ENCODE measurements at regions of chr5 and their contacts with region 1.

Region 1: DNA sequence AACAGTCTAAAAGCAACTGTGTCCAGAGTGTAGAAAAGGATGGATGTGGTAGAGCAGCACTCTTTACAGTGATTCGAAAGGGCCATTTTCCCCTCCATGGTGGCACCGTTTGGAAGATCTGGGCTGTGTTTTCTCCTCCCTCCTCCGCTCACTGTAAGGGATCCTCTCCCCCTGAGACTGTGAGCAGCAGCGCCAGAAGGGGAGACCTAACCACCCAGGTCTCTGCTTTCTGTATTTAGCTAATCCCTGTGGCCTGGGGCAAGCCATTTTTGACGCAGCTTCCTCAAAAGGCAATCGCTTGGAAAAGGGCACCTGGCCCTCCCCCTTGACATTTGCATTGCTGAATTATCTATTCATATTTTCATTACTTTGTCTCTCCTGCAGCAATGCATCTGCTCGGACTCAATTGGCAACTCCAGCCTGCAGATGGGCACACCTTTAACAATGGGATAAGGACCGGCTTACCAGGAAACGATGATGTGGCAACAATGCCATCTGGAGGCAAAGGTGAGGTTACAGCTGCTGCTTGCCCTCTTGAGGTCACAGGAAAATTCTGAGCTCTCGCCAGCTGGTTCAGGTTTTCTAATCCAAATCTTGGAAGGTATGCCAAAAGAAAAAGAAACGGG is 244.3 kb upstream of the WWC1 start:
- DNase-seq: peak; percentile 66
- ATAC-seq: peak; percentile 87
- H3K4me3 ChIP-seq: no peak overlapping the region
- H3K27ac ChIP-seq: no peak overlapping the region
- H3K4me1 ChIP-seq: no peaks in the 10 kb centered on the region
- H3K27me3 ChIP-seq: peaks cover 61% of the 10 kb centered on the region
- CTCF ChIP-seq: peak; percentile 75

Region 2: GRCh38 chr5:166961039-166961438 is 1086.1 kb before region 1 on chr5:
- CTCF ChIA-PET with region 1: no interaction called
- POLR2A ChIA-PET with region 1: no interaction called
- intact Hi-C with region 1: loop called (anchors 5 kb)
- DNase-seq: peak; percentile 41
- ATAC-seq: no peak
- H3K4me3 ChIP-seq: no peak overlapping the region
- H3K27ac ChIP-seq: no peak overlapping the region
- H3K4me1 ChIP-seq: no peaks in the 10 kb centered on the region
- H3K27me3 ChIP-seq: no peaks in the 10 kb centered on the region
- CTCF ChIP-seq: peak; percentile 50

Region 3: DNA sequence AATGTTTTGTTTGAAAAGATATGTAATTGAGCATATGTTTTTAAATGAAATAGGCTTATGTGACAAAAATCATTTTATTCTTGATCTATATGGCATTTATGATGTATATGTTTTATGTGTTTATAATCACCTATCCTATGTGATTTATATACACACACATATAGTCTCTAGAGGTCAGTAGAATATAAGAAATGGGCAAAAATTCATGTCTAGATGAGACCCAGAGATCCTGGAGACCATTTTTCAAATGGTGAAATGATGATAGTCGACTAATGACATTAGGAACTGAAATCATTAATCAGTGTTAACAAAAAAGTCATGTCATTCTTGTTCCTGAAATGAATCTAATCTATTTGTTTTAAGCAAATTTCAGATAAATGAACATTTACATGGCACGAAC is 464.9 kb before region 1 on chr5:
- CTCF ChIA-PET with region 1: no interaction called
- POLR2A ChIA-PET with region 1: no interaction called
- intact Hi-C with region 1: loop called (anchors 1 kb)
- DNase-seq: peak; percentile 50
- ATAC-seq: peak; percentile 59
- H3K4me3 ChIP-seq: no peak overlapping the region
- H3K27ac ChIP-seq: no peak overlapping the region
- H3K4me1 ChIP-seq: no peaks in the 10 kb centered on the region
- H3K27me3 ChIP-seq: peaks cover 64% of the 10 kb centered on the region
- CTCF ChIP-seq: peak; percentile 60; the same call in 1 of the 2 replicates

Region 4: DNA sequence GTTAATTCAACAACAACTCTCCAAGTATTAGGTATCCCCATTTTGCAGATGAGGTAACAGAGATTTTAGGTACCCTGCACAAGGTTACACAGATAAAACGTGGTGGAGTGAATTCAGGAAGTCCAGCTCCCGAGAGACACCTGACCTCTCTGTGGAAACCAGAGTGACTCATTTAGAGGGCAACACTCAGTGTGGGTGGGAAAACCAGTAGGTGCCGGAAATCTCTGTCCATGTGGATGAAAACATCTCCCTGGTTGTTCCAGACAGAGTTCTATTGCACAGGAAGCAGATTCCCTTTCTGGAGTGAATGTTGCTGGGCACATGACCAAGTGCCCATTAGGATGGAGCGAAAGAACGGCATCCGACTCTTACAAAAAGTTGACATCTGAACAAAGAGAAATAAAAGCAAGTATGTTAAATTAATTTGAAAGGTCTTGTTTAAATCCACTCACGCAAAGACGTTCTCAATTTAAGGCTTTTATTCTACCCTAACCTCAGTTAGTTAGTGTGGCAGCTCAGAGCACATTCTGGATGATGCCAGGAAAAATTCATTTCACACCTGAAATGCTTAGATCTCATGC is 147.6 kb before region 1 on chr5:
- CTCF ChIA-PET with region 1: no interaction called
- POLR2A ChIA-PET with region 1: no interaction called
- intact Hi-C with region 1: no loop called
- DNase-seq: peak; percentile 26
- ATAC-seq: no peak
- H3K4me3 ChIP-seq: no peak overlapping the region
- H3K27ac ChIP-seq: no peak overlapping the region
- H3K4me1 ChIP-seq: no peaks in the 10 kb centered on the region
- H3K27me3 ChIP-seq: peaks cover 93% of the 10 kb centered on the region
- CTCF ChIP-seq: no peak

Measured in PC-3 (cell line).